Activated CD4-positive, alpha-beta T cell treated with anti-CD3 and anti-CD28 coated beads for 36 hours (primary cell): ENCODE measurements at regions of chr16 and their contacts with region 1.

Region 1: GRCh38 chr16:82987767-82988166 is 361.0 kb downstream of the CDH13 start:
- DNase-seq: no peak
- ATAC-seq: no peak
- H3K4me3 Mint-ChIP-seq: no peak overlapping the region
- H3K27ac Mint-ChIP-seq: no peak overlapping the region
- H3K4me1 Mint-ChIP-seq: no peaks in the 10 kb centered on the region
- H3K27me3 Mint-ChIP-seq: peaks cover 4% of the 10 kb centered on the region

Region 2: GRCh38 chr16:82694239-82694863 is 293.4 kb before region 1 on chr16:
- CTCF ChIA-PET with region 1: no interaction called
- POLR2A ChIA-PET with region 1: no interaction called
- intact Hi-C with region 1: no loop called
- DNase-seq: no peak
- ATAC-seq: no peak
- H3K4me3 Mint-ChIP-seq: no peak overlapping the region
- H3K27ac Mint-ChIP-seq: no peak overlapping the region
- H3K4me1 Mint-ChIP-seq: no peaks in the 10 kb centered on the region
- H3K27me3 Mint-ChIP-seq: peaks cover 3% of the 10 kb centered on the region

Region 3: DNA sequence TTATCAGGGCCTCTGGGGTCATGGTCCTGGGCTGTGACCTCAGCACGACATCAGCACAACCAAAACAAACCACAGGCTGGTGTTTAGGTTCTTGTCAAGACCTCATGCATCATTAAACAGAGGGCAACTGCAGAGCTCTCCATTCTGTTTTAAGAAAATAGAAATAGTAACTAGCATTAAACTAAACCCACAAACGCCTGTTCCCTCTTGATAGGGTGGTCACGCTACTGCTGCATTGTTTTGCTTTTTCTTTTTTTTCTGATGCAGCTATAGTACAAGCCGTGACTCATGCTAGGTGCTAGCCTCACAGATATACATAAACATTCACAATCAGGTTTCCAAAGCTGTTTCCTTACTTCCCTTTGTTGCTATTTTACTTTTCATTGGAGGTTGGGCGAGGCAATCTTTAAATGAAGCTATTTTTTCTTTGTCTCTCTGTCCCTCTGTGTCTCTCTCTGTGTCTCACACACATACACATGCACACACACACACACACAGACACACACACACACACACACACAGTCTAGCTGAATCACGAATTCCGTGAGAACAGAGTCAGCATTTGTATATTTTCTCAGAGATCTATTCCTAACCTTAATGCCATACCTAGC is 50.7 kb before region 1 on chr16:
- CTCF ChIA-PET with region 1: no interaction called
- POLR2A ChIA-PET with region 1: no interaction called
- intact Hi-C with region 1: loop called in 1 of 2 experiments (anchors 5 kb)
- DNase-seq: no peak
- ATAC-seq: no peak
- H3K4me3 Mint-ChIP-seq: no peak overlapping the region
- H3K27ac Mint-ChIP-seq: no peak overlapping the region
- H3K4me1 Mint-ChIP-seq: no peaks in the 10 kb centered on the region
- H3K27me3 Mint-ChIP-seq: no peaks in the 10 kb centered on the region